ENCODE measurements at regions of chr4 and their contacts with region 1.

Region 1: DNA sequence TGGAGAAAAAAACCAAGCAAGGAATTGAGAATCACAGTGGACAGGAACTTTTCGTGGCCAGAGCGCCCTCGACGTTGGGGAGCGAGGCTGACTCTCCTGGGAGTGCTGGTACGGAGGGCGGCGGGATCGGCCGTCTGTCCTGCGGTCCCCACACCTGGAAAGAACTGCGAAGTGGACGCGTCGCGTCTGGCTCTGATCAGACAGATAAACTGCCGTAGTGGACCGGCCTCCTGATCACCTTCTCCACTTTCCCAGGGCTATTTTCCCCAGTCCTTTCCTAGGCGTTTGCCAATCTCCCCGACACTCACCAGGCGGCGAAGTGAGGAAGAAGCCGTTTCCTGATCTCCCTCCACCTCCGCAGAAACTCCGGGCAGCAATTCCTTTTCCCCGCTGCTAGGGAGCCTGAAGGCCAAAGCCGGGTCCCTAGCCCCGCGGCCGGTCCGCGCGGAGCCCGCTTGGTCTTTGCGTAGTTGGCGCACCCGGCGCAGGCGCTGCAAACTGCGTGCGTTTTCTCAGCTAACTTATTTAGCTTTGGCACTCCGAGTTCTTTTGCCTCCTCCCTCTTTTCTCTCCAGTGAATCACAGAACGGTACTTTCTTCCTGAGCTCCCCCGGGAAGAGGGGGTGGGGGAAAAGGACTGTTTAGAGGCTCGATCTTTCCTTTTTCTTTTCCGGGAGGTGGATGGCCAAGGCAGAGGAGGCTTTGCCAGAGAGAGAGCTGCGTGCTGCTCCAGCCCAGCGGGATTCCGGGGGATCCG is at the start of gene ARSJ:
- DNase-seq: peak; percentile 88
- ATAC-seq: peak; percentile 71
- H3K4me3 ChIP-seq: peak within 1 kb of the TSS; percentile 73
- H3K27ac ChIP-seq: peak within 1 kb of the TSS; percentile 98
- H3K4me1 ChIP-seq: peaks cover 8% of the 10 kb centered on the region
- H3K27me3 ChIP-seq: no peaks in the 10 kb centered on the region
- CTCF ChIP-seq: 0 out of 2 replicates have a peak, but pooled peaks have one; percentile 18
- POLR2A ChIP-seq: peak; percentile 74; the same call in 1 of the 2 replicates
- RAD21 ChIP-seq: peak; percentile 1; the same call in 1 of the 2 replicates
- total RNA-seq, gene ARSJ: 126 and 143 TPM in 2 replicates

Region 2: GRCh38 chr4:113761620-113762185 is 217.6 kb before region 1 on chr4 and contains the start of gene CAMK2D:
- CTCF ChIA-PET with region 1: no interaction called
- POLR2A ChIA-PET with region 1: no interaction called
- dilution Hi-C with region 1: no loop called
- in situ Hi-C with region 1: no loop called
- intact Hi-C with region 1: loop called (anchors 1 kb)
- DNase-seq: peak; percentile 89
- ATAC-seq: peak; percentile 50
- H3K4me3 ChIP-seq: peak within 1 kb of the TSS; percentile 93
- H3K27ac ChIP-seq: peak within 1 kb of the TSS; percentile 90
- H3K4me1 ChIP-seq: 0 out of 2 replicates have a peak, but pooled peaks cover 1% of the 10 kb centered on the region
- H3K27me3 ChIP-seq: no peaks in the 10 kb centered on the region
- CTCF ChIP-seq: peak; percentile 75
- POLR2A ChIP-seq: no peak; the same call in 1 of the 2 replicates
- RAD21 ChIP-seq: peak; percentile 66
- total RNA-seq, gene CAMK2D: 156 and 181 TPM in 2 replicates

Region 3: GRCh38 chr4:113921089-113921794 is 58.1 kb before region 1 on chr4:
- CTCF ChIA-PET with region 1: no interaction called
- POLR2A ChIA-PET with region 1: no interaction called
- dilution Hi-C with region 1: no loop called
- in situ Hi-C with region 1: no loop called
- intact Hi-C with region 1: loop called (anchors 5 kb)
- DNase-seq: peak; percentile 67
- ATAC-seq: peak; percentile 82
- H3K4me3 ChIP-seq: no peak overlapping the region
- H3K27ac ChIP-seq: no peak overlapping the region
- H3K4me1 ChIP-seq: peaks cover 11% of the 10 kb centered on the region
- H3K27me3 ChIP-seq: no peaks in the 10 kb centered on the region
- CTCF ChIP-seq: no peak
- POLR2A ChIP-seq: no peak
- RAD21 ChIP-seq: no peak

Region 4: DNA sequence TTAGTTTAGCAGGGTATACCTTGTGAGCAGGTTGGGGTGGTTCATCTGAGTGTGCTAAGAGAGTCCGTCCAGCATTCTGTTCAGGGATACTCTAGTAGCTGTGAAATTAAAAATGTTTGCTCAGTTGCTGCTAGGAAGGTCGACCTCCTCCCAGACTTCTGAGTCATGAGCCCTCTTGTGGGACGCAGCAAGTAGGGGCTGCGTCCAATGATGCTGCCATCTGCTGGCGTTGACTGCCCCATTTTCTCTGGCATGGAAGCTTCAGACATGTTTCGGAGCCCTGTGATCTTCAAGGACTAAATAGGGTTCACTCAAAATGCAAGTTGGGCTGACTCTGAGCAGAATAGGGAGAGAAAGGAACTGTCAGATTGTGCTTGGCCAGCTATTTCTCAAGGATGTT is 201.2 kb after region 1 on chr4:
- CTCF ChIA-PET with region 1: interaction called, 4 read pairs
- POLR2A ChIA-PET with region 1: no interaction called
- dilution Hi-C with region 1: no loop called
- in situ Hi-C with region 1: no loop called
- intact Hi-C with region 1: loop called (anchors 1 kb)
- DNase-seq: peak; percentile 85
- ATAC-seq: peak; percentile 95
- H3K4me3 ChIP-seq: no peak overlapping the region
- H3K27ac ChIP-seq: no peak overlapping the region
- H3K4me1 ChIP-seq: 0 out of 2 replicates have a peak, but pooled peaks cover 2% of the 10 kb centered on the region
- H3K27me3 ChIP-seq: no peaks in the 10 kb centered on the region
- CTCF ChIP-seq: peak; percentile 74
- POLR2A ChIP-seq: no peak
- RAD21 ChIP-seq: peak; percentile 76

Region 5: GRCh38 chr4:114263233-114263632 is 283.9 kb after region 1 on chr4:
- CTCF ChIA-PET with region 1: no interaction called
- POLR2A ChIA-PET with region 1: interaction called, 10 read pairs
- dilution Hi-C with region 1: no loop called
- in situ Hi-C with region 1: no loop called
- intact Hi-C with region 1: no loop called
- DNase-seq: peak; percentile 81
- ATAC-seq: peak; percentile 89
- H3K4me3 ChIP-seq: no peak overlapping the region
- H3K27ac ChIP-seq: no peak overlapping the region
- H3K4me1 ChIP-seq: no peaks in the 10 kb centered on the region
- H3K27me3 ChIP-seq: no peaks in the 10 kb centered on the region
- CTCF ChIP-seq: no peak
- POLR2A ChIP-seq: no peak
- RAD21 ChIP-seq: no peak

Region 6: DNA sequence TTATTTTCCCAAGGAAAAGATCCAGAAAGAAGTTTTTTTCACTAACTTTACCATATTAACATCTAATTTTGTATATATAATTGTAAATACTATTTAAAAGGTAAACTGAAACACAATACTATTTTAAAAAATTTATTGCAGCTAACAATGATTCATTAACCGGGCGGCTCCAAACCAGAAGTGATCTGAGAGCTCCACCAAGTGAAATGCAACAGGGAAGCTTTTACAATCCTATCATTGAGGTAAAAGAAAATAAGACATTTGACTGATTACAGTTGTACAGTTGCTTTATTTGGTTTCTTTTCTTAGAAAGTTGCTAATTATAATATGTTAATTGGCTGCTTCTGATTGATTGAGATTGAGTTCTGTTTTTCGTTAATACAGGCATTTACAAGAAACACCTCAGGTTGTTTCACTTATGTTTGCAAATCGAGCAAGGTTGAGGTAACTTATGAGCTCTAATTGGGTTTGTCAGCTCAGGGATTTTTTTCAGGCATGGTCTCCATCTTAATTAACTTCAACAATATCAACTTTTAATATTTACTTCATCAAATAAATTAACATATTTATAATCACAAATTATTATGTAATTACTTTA is 399.1 kb after region 1 on chr4:
- CTCF ChIA-PET with region 1: interaction called, 3 read pairs
- POLR2A ChIA-PET with region 1: no interaction called
- dilution Hi-C with region 1: no loop called
- in situ Hi-C with region 1: loop called (anchors 5 kb)
- intact Hi-C with region 1: loop called (anchors 1 kb)
- DNase-seq: peak; percentile 65
- ATAC-seq: peak; percentile 77
- H3K4me3 ChIP-seq: no peak overlapping the region
- H3K27ac ChIP-seq: no peak overlapping the region
- H3K4me1 ChIP-seq: peaks cover 4% of the 10 kb centered on the region; the same call in 1 of the 2 replicates
- H3K27me3 ChIP-seq: no peaks in the 10 kb centered on the region
- CTCF ChIP-seq: peak; percentile 86
- POLR2A ChIP-seq: no peak
- RAD21 ChIP-seq: peak; percentile 91